CD14-positive monocyte (primary cell): ENCODE measurements at regions of chr3 and their contacts with region 1.

Region 1: DNA sequence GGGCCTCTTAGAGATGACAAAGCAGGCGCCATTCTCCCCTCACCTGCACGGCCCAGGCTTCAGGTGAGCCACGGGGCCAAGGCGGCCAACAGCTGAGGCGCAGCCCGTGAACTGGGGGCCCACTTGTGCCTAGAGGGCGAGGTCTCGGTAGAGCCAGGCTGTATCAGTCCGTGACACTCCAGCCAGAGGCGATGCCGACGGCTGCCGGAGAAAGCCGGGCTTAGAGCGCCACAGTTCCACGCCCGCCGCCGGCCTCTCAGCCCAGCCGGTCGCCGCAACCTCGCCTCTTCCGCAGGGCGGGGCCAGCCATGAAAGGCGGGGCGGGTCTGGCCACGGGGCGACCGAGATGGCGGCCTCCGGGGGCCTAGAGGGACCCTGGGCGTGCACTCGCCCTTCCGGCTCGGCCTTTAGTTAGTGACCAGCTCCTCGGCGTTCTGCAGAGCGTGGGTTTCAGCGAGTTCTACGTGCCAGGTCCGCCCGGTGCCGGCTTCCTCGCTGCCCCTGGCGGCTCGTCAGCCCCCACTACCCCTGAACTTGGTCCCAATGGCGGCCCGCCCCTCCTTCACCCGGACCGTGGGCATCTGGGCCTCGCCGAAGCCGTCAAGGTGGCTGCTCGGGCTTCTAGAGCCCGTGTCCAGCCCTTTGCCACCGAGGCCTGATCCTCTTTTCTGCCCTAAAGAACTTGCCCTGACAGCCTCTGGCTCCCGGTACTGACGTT is at the start of gene ZNF621:
- DNase-seq: peak; percentile 72 to 82 (median 79)
- H3K4me3 ChIP-seq: peak within 1 kb of the TSS; percentile 59 to 95 (median 92)
- H3K4me3 Mint-ChIP-seq: peak within 1 kb of the TSS; percentile 91 to 97
- H3K27ac ChIP-seq: peak within 1 kb of the TSS; percentile 52 to 96
- H3K27ac Mint-ChIP-seq: peak within 1 kb of the TSS; percentile 90 to 97 (median 93)
- H3K4me1 ChIP-seq: peaks cover 14 to 21% of the 10 kb centered on the region in 2 donors
- H3K4me1 Mint-ChIP-seq: peaks cover 26% of the 10 kb centered on the region
- H3K27me3 ChIP-seq: no peaks in the 10 kb centered on the region
- H3K27me3 Mint-ChIP-seq: peaks cover 0 to 3% (median 2%) of the 10 kb centered on the region in 3 donors
- CTCF ChIP-seq: no peak
- polyA plus RNA-seq, gene ZNF621: 1.1 to 12.2 (median 2.0) TPM

Region 2: GRCh38 chr3:39794880-39795279 is 729.8 kb before region 1 on chr3:
- intact Hi-C with region 1: no loop called
- DNase-seq: no peak
- H3K4me3 ChIP-seq: no peak overlapping the region
- H3K4me3 Mint-ChIP-seq: no peak overlapping the region
- H3K27ac ChIP-seq: no peak overlapping the region
- H3K27ac Mint-ChIP-seq: no peak overlapping the region
- H3K4me1 ChIP-seq: no peaks in the 10 kb centered on the region
- H3K4me1 Mint-ChIP-seq: no peaks in the 10 kb centered on the region
- H3K27me3 ChIP-seq: no peaks in the 10 kb centered on the region
- H3K27me3 Mint-ChIP-seq: peaks cover 5 to 8% (median 8%) of the 10 kb centered on the region in 3 donors
- CTCF ChIP-seq: no peak

Region 3: GRCh38 chr3:40476478-40477470 is 48.0 kb before region 1 on chr3 and contains the start of gene ZNF619:
- intact Hi-C with region 1: loop called in 1 of 2 experiments (anchors 10 kb)
- DNase-seq: peak; percentile 71 to 81 (median 75)
- H3K4me3 ChIP-seq: peak within 1 kb of the TSS; percentile 85 to 95 (median 86)
- H3K4me3 Mint-ChIP-seq: peak within 1 kb of the TSS; percentile 88 to 95
- H3K27ac ChIP-seq: peak within 1 kb of the TSS; percentile 56 to 95
- H3K27ac Mint-ChIP-seq: peak within 1 kb of the TSS; percentile 85 to 98 (median 97)
- H3K4me1 ChIP-seq: peaks cover 12 to 13% of the 10 kb centered on the region in 2 donors
- H3K4me1 Mint-ChIP-seq: peaks cover 16% of the 10 kb centered on the region
- H3K27me3 ChIP-seq: no peaks in the 10 kb centered on the region
- H3K27me3 Mint-ChIP-seq: peaks cover 0 to 3% (median 1%) of the 10 kb centered on the region in 3 donors
- CTCF ChIP-seq: no peak
- polyA plus RNA-seq, gene ZNF619: 1.6 to 3.4 (median 1.8) TPM

Region 4: GRCh38 chr3:40608091-40608490 is 83.4 kb after region 1 on chr3:
- intact Hi-C with region 1: no loop called
- DNase-seq: no peak
- H3K4me3 ChIP-seq: no peak overlapping the region
- H3K4me3 Mint-ChIP-seq: no peak overlapping the region
- H3K27ac ChIP-seq: no peak overlapping the region
- H3K27ac Mint-ChIP-seq: peak overlapping the region in 1 of 7 donors; percentile 17
- H3K4me1 ChIP-seq: no peaks in the 10 kb centered on the region
- H3K4me1 Mint-ChIP-seq: no peaks in the 10 kb centered on the region
- H3K27me3 ChIP-seq: no peaks in the 10 kb centered on the region
- H3K27me3 Mint-ChIP-seq: peaks cover 1 to 16% (median 10%) of the 10 kb centered on the region in 3 donors
- CTCF ChIP-seq: no peak